PC-9 (cell line): ENCODE measurements at regions of chr14 and their contacts with region 1.

Region 1: GRCh38 chr14:32076278-32077080 is 625 bp upstream of the ARHGAP5 start:
- DNase-seq: peak; percentile 75 to 91
- H3K4me3 ChIP-seq: peak overlapping the region; percentile 78
- H3K27ac ChIP-seq: peak overlapping the region; percentile 98
- H3K4me1 ChIP-seq: peaks cover 26% of the 10 kb centered on the region
- H3K27me3 ChIP-seq: no peaks in the 10 kb centered on the region
- CTCF ChIP-seq: no peak

Region 2: GRCh38 chr14:31456841-31457664 is 619.4 kb before region 1 on chr14 and contains the start of gene DTD2:
- CTCF ChIA-PET with region 1: no interaction called
- POLR2A ChIA-PET with region 1: interaction called, 4 read pairs
- intact Hi-C with region 1: loop called (anchors 2 kb)
- DNase-seq: peak; percentile 81 to 86
- H3K4me3 ChIP-seq: peak within 1 kb of the TSS; percentile 62
- H3K27ac ChIP-seq: peak within 1 kb of the TSS; percentile 68
- H3K4me1 ChIP-seq: peaks cover 13% of the 10 kb centered on the region; the same call in 1 of the 2 replicates
- H3K27me3 ChIP-seq: no peaks in the 10 kb centered on the region
- CTCF ChIP-seq: no peak
- total RNA-seq, gene DTD2: 9.5 and 10.1 TPM in 2 replicates

Region 3: DNA sequence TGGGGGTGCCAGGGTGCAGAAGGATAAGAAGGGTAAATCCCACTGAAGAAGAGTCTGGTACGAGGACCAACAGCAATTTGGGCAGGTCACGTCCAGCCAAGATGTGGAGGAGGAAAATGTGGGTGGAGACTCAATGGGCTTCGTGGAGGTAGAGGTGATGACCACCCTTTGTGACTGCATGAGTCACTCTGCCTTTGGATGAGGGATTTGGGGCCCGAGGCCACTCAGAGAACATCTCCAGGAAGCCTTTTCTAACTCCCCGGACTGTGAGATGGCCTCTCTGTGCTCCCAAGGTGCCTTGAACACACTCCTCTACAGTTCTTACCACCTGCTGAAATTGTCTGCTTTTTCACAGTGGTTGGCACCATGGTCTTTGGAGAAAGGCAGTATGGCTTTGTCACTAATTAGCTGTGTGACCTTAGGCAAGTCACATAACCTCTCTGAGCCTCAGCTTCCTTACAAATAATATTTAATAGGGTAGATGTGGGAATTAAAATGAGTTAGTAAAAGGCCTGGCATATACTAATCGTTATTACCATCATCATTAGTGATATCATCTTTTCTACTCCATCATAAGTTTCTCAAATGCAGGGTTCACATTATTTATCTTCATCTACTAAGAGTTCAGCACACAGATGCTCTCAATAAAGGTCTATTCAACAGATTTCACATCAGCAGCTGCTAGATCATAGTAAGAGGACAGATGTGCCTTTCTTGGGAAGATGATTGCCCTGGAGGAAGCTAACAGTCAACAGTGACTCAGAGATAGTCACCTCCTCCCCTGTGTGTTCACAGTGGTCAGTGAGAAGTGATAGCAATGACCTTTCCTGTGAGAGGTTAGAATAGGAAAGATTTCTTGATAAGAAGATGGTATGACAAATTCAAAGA is 66.3 kb before region 1 on chr14:
- CTCF ChIA-PET with region 1: no interaction called
- POLR2A ChIA-PET with region 1: no interaction called
- intact Hi-C with region 1: loop called (anchors 5 kb)
- DNase-seq: peak; percentile 39 to 93
- H3K4me3 ChIP-seq: no peak overlapping the region
- H3K27ac ChIP-seq: peak overlapping the region; percentile 94
- H3K4me1 ChIP-seq: peaks cover 68% of the 10 kb centered on the region
- H3K27me3 ChIP-seq: no peaks in the 10 kb centered on the region
- CTCF ChIP-seq: no peak

Region 4: DNA sequence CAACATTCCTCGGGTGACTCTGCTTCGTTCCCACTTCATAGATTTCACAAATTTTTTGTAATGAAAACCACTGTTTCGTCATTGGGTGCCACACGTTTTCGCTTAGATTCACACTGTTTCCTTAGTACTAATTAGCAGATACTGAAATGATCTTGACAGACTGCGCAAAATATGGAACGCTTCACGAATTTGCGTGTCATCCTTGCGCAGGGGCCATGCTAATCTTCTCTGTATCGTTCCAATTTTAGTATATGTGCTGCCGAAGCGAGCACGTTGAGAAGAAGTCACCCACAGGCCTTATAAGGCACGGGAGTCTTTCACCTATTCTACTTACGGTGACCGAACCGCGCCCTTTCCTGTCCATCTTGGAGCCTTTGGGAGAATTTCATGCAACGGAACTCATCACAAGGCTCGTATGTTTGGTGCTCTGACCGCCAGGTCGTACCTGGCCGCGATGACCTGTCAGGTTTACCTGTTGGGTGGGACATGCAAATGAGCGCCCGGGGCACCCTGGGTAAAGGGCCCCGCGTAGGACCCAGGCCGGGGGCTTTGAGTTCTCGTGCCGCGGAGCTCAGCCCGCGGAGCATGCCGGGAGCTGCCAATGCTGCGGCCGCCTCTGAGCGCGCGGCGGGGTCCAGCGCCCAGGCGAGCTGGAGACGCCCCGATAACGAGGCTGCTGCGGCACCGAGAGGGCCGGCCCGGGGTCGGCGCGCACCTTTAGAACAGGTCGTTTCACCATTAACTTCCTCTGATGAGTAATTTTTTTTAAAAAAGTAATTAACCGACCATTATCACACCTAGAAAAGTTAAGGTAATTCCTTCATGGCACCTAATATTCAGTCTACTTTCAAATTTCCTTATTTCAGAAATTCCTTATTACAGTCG is 126.8 kb after region 1 on chr14 and contains the start of gene RNU6-8:
- CTCF ChIA-PET with region 1: no interaction called
- POLR2A ChIA-PET with region 1: no interaction called
- intact Hi-C with region 1: loop called (anchors 2 kb)
- DNase-seq: peak; percentile 71 to 82
- H3K4me3 ChIP-seq: peak within 1 kb of the TSS; percentile 88
- H3K27ac ChIP-seq: peak within 1 kb of the TSS; percentile 86
- H3K4me1 ChIP-seq: peaks cover 13% of the 10 kb centered on the region; the same call in 1 of the 2 replicates
- H3K27me3 ChIP-seq: no peaks in the 10 kb centered on the region
- CTCF ChIP-seq: no peak
- total RNA-seq, gene RNU6-8: not detected in 2 replicates

Region 5: DNA sequence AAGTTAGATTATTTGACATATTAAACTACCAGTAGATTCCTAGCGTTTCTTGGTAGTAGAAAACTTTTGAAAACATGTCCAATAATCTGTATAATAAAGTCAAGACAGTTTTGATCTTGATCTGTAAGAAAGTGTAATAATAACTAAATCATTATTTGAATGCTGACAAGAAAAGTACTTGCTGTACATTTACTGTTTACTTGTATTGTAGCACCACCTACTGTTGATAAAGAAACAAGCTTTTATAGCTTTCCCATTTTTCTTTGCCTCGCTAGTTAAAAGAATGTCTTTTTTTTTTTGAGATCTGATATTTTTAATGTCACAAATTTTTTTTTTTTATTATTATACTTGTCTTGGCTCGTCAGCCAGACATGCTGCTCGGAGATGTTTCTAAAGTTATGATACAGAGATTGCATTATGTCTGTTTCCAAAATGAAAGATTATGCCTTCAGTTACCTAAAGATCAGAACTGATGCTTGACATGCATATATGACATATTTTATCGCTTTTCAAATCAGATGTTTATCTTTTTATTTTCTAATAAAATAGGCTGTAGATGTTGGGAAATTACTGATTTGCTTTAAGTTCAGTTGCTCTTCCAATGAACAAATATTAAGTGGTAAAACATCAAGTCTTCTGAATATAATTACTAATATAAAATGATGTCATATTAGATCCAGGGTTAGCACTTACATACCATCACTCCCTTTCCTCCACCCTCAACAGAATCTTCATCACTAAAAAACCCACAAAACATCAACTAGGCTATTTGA is 393.1 kb after region 1 on chr14:
- CTCF ChIA-PET with region 1: no interaction called
- POLR2A ChIA-PET with region 1: no interaction called
- intact Hi-C with region 1: loop called (anchors 5 kb)
- DNase-seq: peak in 1 of 2 experiments; percentile 48
- H3K4me3 ChIP-seq: no peak overlapping the region
- H3K27ac ChIP-seq: peak overlapping the region; percentile 71
- H3K4me1 ChIP-seq: peaks cover 46% of the 10 kb centered on the region
- H3K27me3 ChIP-seq: no peaks in the 10 kb centered on the region
- CTCF ChIP-seq: peak; percentile 74